ENCODE measurements at regions of chr12 and their contacts with region 1.

Region 1: DNA sequence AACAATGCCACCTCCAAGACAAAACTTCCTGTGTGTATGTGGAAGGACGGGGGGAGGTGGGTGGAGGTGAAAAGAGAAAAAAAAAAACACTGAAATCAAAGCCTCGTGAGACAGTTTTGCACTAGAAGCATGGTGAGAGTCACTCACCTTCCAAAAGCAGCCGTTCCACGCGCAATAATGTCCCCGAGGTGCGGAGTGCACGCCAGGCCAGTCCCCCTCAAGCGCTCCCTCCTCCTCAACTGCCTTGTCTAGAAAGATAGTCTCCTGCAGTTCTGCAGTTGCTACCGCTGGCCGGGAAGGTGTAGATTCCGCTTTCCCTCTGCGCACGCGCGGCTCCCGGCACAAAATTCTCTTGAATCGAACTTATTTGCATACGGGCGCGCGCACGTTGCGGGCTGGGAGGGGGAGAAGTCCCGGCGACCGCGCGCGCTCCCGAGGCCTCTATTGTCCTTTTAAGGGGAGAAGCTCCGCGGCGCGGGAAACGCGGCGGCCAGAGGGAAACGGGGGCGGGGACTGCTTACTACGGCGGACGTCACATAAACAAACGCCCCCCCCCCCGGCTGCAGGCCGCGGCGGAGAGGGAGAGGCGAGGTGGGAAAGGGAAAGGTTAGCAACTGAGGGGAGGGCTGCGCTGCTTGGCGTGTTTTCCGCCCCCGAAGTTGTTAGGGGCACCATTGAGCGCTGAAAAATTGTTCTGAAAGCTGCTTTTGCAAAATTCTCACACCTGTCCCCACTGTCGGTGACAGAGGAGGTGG is at the start of gene SINHCAF:
- DNase-seq: peak; percentile 99
- H3K4me3 ChIP-seq: peak within 1 kb of the TSS; percentile 86
- H3K27ac ChIP-seq: peak within 1 kb of the TSS; percentile 69
- H3K4me1 ChIP-seq: peaks cover 26% of the 10 kb centered on the region
- CTCF ChIP-seq: no peak
- total RNA-seq, gene SINHCAF: 51.0 and 54.0 TPM in 2 replicates

Region 2: DNA sequence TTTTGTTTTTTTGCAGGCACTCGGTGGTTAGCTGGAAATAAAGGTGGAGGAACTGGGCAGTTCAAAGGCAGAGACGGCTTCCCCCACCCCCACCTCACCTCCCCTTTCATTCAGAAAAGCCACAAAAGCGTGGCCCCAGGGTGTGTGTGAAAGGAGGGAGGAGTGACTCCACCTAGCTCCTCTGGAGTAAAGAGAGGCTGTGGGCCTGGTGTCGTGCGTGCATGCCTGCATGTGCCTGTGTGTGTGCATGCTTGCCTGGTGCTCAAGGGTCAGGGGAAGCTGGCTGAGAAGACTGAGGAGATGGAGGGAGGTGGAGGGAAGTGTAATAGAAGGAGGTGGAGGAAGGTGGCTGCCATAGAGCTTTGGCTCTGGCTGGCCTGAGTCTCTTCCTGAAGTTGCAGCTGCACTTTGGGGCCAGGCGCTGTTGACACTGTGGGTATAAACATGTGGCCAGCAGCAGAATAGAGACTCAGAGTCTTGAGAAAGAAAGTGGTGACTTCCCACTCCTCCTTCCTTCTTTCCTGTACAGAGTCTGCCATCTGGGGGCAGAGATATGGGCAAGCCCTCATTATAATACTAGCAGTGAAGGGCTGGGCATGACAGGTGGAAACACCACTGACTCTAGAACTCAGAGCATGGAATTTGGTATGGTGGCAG is 36.8 kb after region 1 on chr12:
- CTCF ChIA-PET with region 1: interaction called, 4 read pairs
- POLR2A ChIA-PET with region 1: interaction called, 4 read pairs
- intact Hi-C with region 1: loop called (anchors 2 kb)
- DNase-seq: peak; percentile 79
- H3K4me3 ChIP-seq: peak overlapping the region; percentile 13
- H3K27ac ChIP-seq: peak overlapping the region; percentile 25
- H3K4me1 ChIP-seq: peaks cover 22% of the 10 kb centered on the region
- CTCF ChIP-seq: peak; percentile 54; the same call in 1 of the 2 replicates

Region 3: GRCh38 chr12:31589904-31590641 is 264.0 kb after region 1 on chr12:
- CTCF ChIA-PET with region 1: no interaction called
- POLR2A ChIA-PET with region 1: interaction called, 3 read pairs
- intact Hi-C with region 1: loop called (anchors 5 kb)
- DNase-seq: peak; percentile 81
- H3K4me3 ChIP-seq: peak overlapping the region; percentile 89
- H3K27ac ChIP-seq: peak overlapping the region; percentile 72
- H3K4me1 ChIP-seq: peaks cover 55% of the 10 kb centered on the region
- CTCF ChIP-seq: peak; percentile 54

Region 4: DNA sequence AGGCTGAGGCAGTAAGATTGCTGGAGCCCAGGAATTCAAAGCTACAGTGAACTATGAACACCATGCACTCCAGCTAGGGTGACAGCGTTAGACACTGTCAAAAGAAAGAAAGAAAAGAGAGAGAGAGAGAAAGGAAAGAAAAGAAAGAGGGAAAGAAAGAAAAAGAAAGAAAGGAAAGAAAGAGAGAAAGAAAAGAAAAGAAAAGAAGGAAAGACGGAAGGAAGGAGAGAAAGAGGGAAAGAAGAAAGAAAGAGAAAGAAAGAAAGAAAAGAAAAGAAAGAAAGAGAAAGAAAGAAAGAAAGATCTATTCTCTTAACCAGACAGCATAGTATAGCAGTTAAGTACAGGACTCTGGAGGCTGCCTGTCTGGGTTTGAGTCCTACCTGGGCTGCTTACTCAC is 286.8 kb after region 1 on chr12:
- CTCF ChIA-PET with region 1: no interaction called
- POLR2A ChIA-PET with region 1: no interaction called
- intact Hi-C with region 1: no loop called
- DNase-seq: no peak
- H3K4me3 ChIP-seq: no peak overlapping the region
- H3K27ac ChIP-seq: no peak overlapping the region
- H3K4me1 ChIP-seq: no peaks in the 10 kb centered on the region
- CTCF ChIP-seq: no peak

Region 5: DNA sequence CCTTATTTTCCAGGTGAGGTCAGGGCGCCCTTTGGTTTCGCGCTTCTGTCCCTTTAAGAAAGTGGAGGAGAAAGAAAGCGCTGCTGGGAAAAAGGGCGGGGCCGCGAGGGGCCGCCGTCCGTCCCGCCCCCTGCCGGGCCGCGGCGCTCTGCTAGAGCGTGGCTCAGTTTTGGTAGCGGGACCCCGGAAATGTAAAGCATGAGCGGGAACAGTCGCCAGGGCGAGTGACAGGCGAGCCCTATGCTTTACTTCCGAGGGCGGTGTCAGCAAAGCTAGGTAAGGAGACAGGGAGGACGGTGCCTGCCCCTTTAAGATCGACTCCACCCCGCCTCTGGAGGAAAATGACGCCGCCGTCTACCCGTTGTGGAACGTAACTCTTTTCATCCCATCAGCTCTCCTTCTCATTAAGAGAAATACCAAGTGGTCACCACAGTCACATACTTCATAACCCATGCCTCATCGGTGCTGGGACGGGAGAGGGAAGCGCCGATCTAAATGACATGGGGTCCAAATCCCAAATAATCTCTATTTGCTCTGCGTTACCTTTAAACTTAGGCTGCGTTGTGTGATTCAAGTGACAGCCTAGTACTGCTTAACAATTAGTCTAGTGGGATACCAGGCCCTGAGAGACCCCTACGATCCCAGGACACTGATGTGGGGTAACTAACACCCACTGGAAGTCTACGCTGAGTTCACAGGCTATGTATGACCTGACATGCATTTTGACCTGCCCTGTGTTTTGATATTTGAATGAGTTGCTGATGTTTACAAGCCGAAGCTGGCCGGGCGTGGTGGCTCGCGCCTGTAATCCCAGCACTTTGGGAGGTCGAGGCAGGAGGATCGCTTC is 333.3 kb after region 1 on chr12 and contains the start of gene ETFBKMT:
- CTCF ChIA-PET with region 1: no interaction called
- POLR2A ChIA-PET with region 1: no interaction called
- intact Hi-C with region 1: loop called (anchors 5 kb)
- DNase-seq: peak; percentile 99
- H3K4me3 ChIP-seq: peak within 1 kb of the TSS; percentile 86
- H3K27ac ChIP-seq: peak within 1 kb of the TSS; percentile 86
- H3K4me1 ChIP-seq: peaks cover 20% of the 10 kb centered on the region
- CTCF ChIP-seq: peak; percentile 65
- total RNA-seq, gene ETFBKMT: 0.54 and 0.92 TPM in 2 replicates

Region 6: DNA sequence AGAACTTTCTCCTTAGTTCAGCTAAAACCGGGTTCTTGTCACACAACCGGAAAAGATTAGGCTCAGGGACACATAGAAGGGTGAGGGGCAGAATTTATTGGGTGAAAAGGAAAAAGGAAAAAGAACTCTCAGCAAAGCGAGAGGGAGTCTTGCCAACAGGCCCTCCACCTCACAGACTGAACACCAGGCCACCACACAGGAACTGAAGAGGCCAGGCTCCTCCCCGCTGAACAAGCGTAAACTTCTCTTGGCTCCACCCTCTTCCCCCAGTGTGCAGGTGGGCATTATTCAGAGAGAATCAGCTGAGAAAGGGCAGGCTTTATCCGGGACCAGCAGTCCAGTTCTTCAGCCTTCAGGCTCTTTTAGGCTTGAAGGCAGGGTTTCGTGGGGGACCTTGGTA is 947.7 kb after region 1 on chr12:
- CTCF ChIA-PET with region 1: no interaction called
- POLR2A ChIA-PET with region 1: no interaction called
- intact Hi-C with region 1: loop called (anchors 10 kb)
- DNase-seq: peak; percentile 92
- H3K4me3 ChIP-seq: peak overlapping the region; percentile 50
- H3K27ac ChIP-seq: peak overlapping the region; percentile 97
- H3K4me1 ChIP-seq: peaks cover 65% of the 10 kb centered on the region
- CTCF ChIP-seq: no peak